ENCODE measurements at regions of chr6 and their contacts with region 1.

Region 1: GRCh38 chr6:149082286-149082707 is 235.2 kb upstream of the TAB2 start:
- DNase-seq: peak; percentile 78
- H3K4me3 Mint-ChIP-seq: no peak overlapping the region
- H3K27ac Mint-ChIP-seq: no peak overlapping the region
- H3K4me1 Mint-ChIP-seq: peaks cover 11% of the 10 kb centered on the region
- H3K27me3 Mint-ChIP-seq: no peaks in the 10 kb centered on the region
- CTCF ChIP-seq: peak; percentile 72

Region 2: DNA sequence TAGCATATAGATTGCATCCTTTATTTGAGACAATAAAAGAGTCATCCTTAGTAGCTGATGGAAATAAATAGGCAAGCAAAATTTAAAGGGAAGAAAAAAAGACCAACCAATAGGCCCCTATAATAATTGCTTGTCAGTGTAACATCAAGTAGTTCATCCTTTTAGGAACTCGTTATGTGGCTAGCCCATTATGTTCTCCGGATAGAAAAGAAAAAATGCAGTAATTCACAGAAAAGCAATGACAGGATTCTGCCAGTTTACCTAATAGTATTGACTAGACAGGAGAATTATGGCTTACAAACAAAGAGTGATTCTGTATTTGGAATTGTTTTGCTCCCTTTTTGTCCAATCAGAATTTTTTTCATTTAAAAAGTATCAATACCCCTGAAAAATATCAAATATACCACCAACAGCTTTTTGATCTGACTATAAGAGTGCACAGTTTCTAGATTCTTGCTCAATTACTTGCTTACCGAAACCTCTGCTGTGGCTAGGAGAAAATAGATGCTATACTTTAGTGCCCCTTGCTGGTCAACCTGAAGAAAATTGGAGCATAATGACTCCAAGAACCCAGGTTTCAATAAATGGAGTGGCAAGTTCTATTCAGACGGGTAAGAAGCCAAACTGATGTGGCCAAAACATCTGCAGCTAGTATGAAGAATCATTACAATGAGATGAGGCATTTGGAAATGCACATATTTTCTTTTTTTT is 831.2 kb before region 1 on chr6:
- CTCF ChIA-PET with region 1: no interaction called
- POLR2A ChIA-PET with region 1: no interaction called
- intact Hi-C with region 1: no loop called
- DNase-seq: peak; percentile 66
- H3K4me3 Mint-ChIP-seq: no peak overlapping the region
- H3K27ac Mint-ChIP-seq: no peak overlapping the region
- H3K4me1 Mint-ChIP-seq: peaks cover 6% of the 10 kb centered on the region
- H3K27me3 Mint-ChIP-seq: no peaks in the 10 kb centered on the region
- CTCF ChIP-seq: peak; percentile 63

Region 3: DNA sequence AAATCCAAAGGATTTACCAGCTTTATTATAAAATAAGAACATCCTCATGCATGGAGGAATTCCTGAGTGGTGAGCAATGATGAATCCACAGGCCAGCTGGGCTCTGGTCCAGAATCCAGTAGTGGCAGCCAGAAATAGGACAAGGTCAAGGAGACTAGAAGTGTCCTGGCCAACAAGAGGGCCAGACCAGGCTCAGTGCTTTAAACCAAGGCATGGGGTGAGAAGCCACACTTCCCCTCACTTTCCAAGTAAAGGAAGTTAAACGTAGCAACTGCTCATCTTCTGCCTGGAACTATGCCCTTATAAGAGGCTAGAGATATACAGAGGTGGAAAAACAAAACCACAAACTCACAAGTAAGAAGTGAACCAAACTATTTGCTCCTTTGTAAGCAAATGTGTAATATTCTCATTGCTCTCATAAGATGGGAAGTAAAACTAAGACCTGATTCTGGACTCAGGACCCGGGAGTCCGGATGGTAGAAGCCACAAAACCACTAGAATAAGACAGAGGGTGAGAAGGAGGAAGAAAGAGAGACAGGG is 82.3 kb before region 1 on chr6:
- CTCF ChIA-PET with region 1: no interaction called
- POLR2A ChIA-PET with region 1: no interaction called
- intact Hi-C with region 1: no loop called
- DNase-seq: peak; percentile 85
- H3K4me3 Mint-ChIP-seq: no peak overlapping the region
- H3K27ac Mint-ChIP-seq: peak overlapping the region; percentile 2
- H3K4me1 Mint-ChIP-seq: peaks cover 35% of the 10 kb centered on the region
- H3K27me3 Mint-ChIP-seq: no peaks in the 10 kb centered on the region
- CTCF ChIP-seq: no peak

Region 4: DNA sequence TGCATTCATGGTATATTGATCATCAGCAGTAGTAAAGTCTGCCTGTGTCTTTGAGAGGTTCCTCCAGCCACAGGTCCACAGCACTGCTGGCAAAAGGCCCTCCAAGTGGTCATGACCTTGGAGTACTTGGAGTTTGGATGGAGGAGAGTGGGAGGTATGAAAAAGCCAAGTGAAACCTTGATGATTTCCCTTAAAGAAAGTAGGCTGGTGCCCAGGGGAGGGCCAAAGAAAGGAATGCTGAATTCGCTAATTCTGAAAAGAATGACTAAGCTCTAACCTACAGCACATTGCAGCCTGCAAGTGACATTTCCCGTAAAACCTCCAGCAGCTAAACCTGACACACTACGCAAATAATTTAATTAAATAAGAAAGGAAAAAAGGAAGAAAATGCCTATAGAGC is 11.9 kb after region 1 on chr6:
- CTCF ChIA-PET with region 1: interaction called, 10 read pairs
- POLR2A ChIA-PET with region 1: interaction called, 4 read pairs
- intact Hi-C with region 1: no loop called
- DNase-seq: peak; percentile 26
- H3K4me3 Mint-ChIP-seq: no peak overlapping the region
- H3K27ac Mint-ChIP-seq: no peak overlapping the region
- H3K4me1 Mint-ChIP-seq: peaks cover 19% of the 10 kb centered on the region
- H3K27me3 Mint-ChIP-seq: no peaks in the 10 kb centered on the region
- CTCF ChIP-seq: no peak

Region 5: GRCh38 chr6:149147191-149147590 is 64.9 kb after region 1 on chr6:
- CTCF ChIA-PET with region 1: no interaction called
- POLR2A ChIA-PET with region 1: no interaction called
- intact Hi-C with region 1: no loop called
- DNase-seq: no peak
- H3K4me3 Mint-ChIP-seq: no peak overlapping the region
- H3K27ac Mint-ChIP-seq: no peak overlapping the region
- H3K4me1 Mint-ChIP-seq: peaks cover 6% of the 10 kb centered on the region
- H3K27me3 Mint-ChIP-seq: peaks cover 31% of the 10 kb centered on the region
- CTCF ChIP-seq: no peak

Region 6: DNA sequence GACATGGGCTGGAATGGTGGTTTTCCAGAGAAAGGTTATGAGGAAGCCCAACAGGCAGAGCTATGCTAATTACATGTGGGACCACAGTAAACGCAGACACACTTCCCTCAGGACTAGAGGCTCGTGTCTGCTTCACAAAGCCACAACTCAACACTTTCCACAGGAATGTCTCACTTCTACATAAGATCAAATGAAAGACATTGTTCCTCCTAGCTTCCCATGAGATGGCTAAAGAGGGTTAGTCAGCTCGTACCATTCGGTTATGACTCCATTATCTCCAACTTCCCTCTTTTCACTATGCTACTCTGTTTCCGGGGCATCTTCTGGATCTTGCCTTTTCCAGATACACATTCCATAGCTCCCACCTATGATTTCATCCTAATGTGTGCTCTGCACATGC is 431.6 kb after region 1 on chr6:
- CTCF ChIA-PET with region 1: interaction called, 9 read pairs
- POLR2A ChIA-PET with region 1: no interaction called
- intact Hi-C with region 1: loop called (anchors 2 kb)
- DNase-seq: no peak
- H3K4me3 Mint-ChIP-seq: no peak overlapping the region
- H3K27ac Mint-ChIP-seq: no peak overlapping the region
- H3K4me1 Mint-ChIP-seq: peaks cover 6% of the 10 kb centered on the region
- H3K27me3 Mint-ChIP-seq: no peaks in the 10 kb centered on the region
- CTCF ChIP-seq: no peak